Mammary epithelial cell (primary cell): ENCODE measurements at regions of chr3 and their contacts with region 1.

Region 1: DNA sequence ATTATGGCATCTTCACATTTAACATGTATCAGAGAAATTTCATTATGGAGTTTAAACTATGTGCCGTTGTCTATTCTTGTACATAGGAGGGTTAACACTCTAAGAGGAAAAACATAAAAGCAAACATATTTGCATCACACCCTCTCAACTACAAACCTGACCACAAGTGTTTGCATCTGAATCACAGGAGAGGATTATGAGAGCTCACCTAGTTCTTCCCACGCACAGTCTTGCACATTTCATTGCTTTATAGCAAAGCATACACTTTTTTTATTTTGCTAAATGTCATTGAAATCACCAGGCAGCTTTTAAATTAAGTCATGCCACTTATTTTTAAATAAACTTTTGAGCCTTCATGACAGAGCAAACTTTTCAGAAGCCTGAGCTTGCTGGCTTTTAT is 12.5 kb downstream of the TRAT1 start:
- DNase-seq: no peak
- H3K4me3 ChIP-seq: no peak overlapping the region
- H3K27ac ChIP-seq: no peak overlapping the region
- H3K4me1 ChIP-seq: no peaks in the 10 kb centered on the region
- H3K27me3 ChIP-seq: no peaks in the 10 kb centered on the region
- CTCF ChIP-seq: no peak

Region 2: GRCh38 chr3:108757404-108757982 is 77.6 kb before region 1 on chr3 and contains the start of gene RETNLB:
- CTCF ChIA-PET with region 1: no interaction called
- dilution Hi-C with region 1: loop called (anchors 5 kb)
- in situ Hi-C with region 1: no loop called
- intact Hi-C with region 1: no loop called
- DNase-seq: no peak
- H3K4me3 ChIP-seq: no peak within 1 kb of the TSS
- H3K27ac ChIP-seq: no peak within 1 kb of the TSS
- H3K4me1 ChIP-seq: no peaks in the 10 kb centered on the region
- H3K27me3 ChIP-seq: no peaks in the 10 kb centered on the region
- CTCF ChIP-seq: no peak
- total RNA-seq, gene RETNLB: not detected

Region 3: DNA sequence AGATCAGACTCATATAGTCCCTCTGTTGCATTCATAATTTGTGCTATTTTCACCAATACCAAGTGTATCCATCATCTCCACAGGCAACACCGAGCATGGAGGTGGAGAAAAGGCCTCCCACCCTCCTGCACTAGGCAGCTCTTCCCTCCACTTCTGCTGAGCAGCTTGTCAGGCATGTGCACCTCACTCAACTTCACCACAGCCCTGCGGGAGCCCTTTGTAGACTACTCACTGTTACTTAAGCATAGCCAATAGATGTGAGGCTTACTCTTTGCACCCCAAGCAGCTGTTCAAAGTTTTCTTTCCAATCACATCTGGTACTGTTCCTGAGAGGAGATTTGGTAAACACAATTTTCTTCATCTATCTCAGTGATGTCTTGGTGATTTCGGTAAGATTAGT is 135.5 kb after region 1 on chr3:
- CTCF ChIA-PET with region 1: no interaction called
- dilution Hi-C with region 1: no loop called
- in situ Hi-C with region 1: no loop called
- intact Hi-C with region 1: no loop called
- DNase-seq: no peak
- H3K4me3 ChIP-seq: no peak overlapping the region
- H3K27ac ChIP-seq: no peak overlapping the region
- H3K4me1 ChIP-seq: no peaks in the 10 kb centered on the region
- H3K27me3 ChIP-seq: no peaks in the 10 kb centered on the region
- CTCF ChIP-seq: no peak